Colonic mucosa (tissue), 4 donors: ENCODE measurements at regions of chr10 and their contacts with region 1.

Region 1: DNA sequence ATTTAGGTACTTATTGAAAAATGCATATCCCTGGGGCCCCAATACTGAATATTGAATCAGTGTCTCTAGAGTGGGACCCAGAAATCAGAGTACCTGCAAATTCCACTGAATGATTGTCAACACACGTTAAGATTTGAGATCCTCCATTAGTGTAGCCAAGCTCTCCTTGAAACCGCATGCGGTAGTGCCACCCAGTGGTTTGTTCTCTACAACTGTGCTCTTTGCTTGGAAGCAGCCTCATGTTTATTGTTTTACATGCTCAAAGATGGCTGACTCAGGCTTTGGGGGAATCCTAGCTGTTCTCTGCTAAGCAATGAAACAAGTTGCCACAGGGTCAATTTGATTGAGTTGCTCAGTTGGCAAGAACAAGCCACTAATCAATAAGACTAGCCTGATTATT is 340.2 kb upstream of the CELF2 start:
- DNase-seq: peak; percentile 57
- H3K4me3 ChIP-seq: no peak overlapping the region
- H3K27ac ChIP-seq: no peak overlapping the region
- H3K4me1 ChIP-seq: no peaks in the 10 kb centered on the region
- H3K27me3 ChIP-seq: no peaks in the 10 kb centered on the region
- CTCF ChIP-seq: peak; percentile 25

Region 2: GRCh38 chr10:9331583-9332008 is 1345.9 kb before region 1 on chr10:
- intact Hi-C with region 1: loop called (anchors 10 kb)
- DNase-seq: no peak
- H3K4me3 ChIP-seq: no peak overlapping the region
- H3K27ac ChIP-seq: no peak overlapping the region
- H3K4me1 ChIP-seq: no peaks in the 10 kb centered on the region
- H3K27me3 ChIP-seq: no peaks in the 10 kb centered on the region
- CTCF ChIP-seq: peak; percentile 85